Gastrocnemius medialis (tissue), 4 donors: ENCODE measurements at regions of chr7 and their contacts with region 1.

Region 1: DNA sequence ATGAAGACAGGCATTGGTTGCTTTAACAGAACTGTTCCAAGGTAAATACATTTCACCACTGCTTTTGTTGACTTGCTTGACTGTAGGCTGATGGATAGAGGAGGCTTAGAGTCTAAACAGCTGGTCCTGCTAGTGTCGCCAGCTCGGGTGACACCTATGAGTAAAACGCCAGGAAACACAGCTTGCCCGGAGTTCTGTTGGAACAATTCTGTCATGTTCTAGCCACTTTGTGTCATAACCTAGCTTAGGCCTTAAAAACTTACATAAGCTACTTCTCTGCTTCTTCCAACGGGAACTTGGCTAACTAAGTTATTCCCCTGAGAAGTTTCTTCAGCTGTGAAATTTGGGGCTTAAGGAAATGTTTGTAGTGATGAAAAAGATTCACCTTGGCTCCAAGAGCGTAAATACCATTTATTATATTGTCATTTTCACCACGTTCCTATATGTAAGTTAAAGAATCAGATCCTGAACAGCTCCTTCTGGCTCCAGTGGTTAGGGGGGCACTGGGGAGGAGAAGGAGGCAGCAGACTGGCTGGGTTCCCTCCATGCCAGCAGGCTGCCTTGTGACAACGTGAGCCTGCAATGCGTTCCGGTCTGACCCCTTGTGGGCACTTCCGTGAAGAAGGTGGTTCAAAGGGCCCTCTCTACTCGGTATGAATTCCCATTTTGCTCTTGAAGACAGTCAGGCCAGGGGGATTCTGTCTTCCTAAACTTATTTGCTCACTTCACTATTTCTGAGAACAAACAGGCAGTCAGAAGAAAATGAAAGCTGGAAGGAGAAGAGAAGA is 253.2 kb downstream of the BMPER start:
- DNase-seq: peak; percentile 86 to 90
- ATAC-seq: peak; percentile 81 to 85
- H3K4me3 ChIP-seq: no peak overlapping the region
- H3K27ac ChIP-seq: peak overlapping the region; percentile 74 to 83 (median 78)
- H3K4me1 ChIP-seq: peaks cover 41 to 53% of the 10 kb centered on the region in 2 donors
- H3K27me3 ChIP-seq: no peaks in the 10 kb centered on the region
- CTCF ChIP-seq: peak; percentile 32 to 60 (median 46)
- POLR2A ChIP-seq: no peak

Region 2: DNA sequence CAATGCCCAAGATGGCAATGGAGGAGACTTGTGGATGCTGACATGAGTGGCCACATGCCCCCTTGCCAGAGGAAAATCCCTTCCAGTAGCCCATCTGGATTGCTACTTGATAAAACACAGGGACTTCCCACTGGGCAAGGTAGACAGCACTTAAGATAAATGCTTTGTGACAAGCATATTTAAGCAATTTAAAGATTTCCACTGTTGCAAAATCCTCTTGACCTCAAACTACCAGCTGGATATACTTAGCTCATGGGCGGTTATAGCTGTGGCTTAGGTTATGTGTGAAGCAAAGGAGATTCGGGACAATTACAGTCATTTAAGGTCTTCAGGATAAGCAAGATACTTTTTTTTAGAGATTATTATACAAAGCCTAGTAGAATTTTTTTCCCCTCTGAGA is 15.2 kb before region 1 on chr7:
- in situ Hi-C with region 1: no loop called
- intact Hi-C with region 1: no loop called
- DNase-seq: no peak
- ATAC-seq: no peak
- H3K4me3 ChIP-seq: no peak overlapping the region
- H3K27ac ChIP-seq: no peak overlapping the region
- H3K4me1 ChIP-seq: peaks cover 15 to 18% of the 10 kb centered on the region in 2 donors
- H3K27me3 ChIP-seq: no peaks in the 10 kb centered on the region
- CTCF ChIP-seq: no peak
- POLR2A ChIP-seq: no peak

Region 3: GRCh38 chr7:34198231-34198641 is 39.7 kb after region 1 on chr7:
- in situ Hi-C with region 1: no loop called
- intact Hi-C with region 1: loop called (anchors 5 kb)
- DNase-seq: peak; percentile 74 to 76
- ATAC-seq: peak; percentile 97 to 99
- H3K4me3 ChIP-seq: no peak overlapping the region
- H3K27ac ChIP-seq: peak overlapping the region; percentile 80 to 91 (median 82)
- H3K4me1 ChIP-seq: peaks cover 11 to 28% of the 10 kb centered on the region in 2 donors
- H3K27me3 ChIP-seq: no peaks in the 10 kb centered on the region
- CTCF ChIP-seq: no peak
- POLR2A ChIP-seq: no peak